ENCODE measurements at regions of chr2 and their contacts with region 1.

Region 1: GRCh38 chr2:104849618-104850141 is 4.2 kb upstream of the POU3F3 start:
- DNase-seq: peak in 1 of 2 experiments; percentile 79
- H3K4me3 ChIP-seq: peak overlapping the region in 1 of 4 experiments; percentile 78; a peak in 3 of 8 replicates
- H3K27ac ChIP-seq: no peak overlapping the region
- H3K4me1 ChIP-seq: peaks cover 16 to 43% (median 22%) of the 10 kb centered on the region in 4 experiments
- H3K27me3 ChIP-seq: peaks cover 52 to 93% (median 74%) of the 10 kb centered on the region in 4 experiments
- CTCF ChIP-seq: peak in 2 of 3 experiments; percentile 54 to 71; a peak in 3 of 4 replicates
- EP300 ChIP-seq: no peak
- POLR2A ChIP-seq: no peak
- RAD21 ChIP-seq: peak; percentile 72 to 74

Region 2: GRCh38 chr2:104733544-104733943 is 116.1 kb before region 1 on chr2:
- CTCF ChIA-PET with region 1: no interaction called
- POLR2A ChIA-PET with region 1: no interaction called
- DNase-seq: peak; percentile 54 to 76
- H3K4me3 ChIP-seq: no peak overlapping the region
- H3K27ac ChIP-seq: no peak overlapping the region
- H3K4me1 ChIP-seq: no peaks in the 10 kb centered on the region
- H3K27me3 ChIP-seq: 0 out of 7 replicates have a peak, but pooled peaks cover 0 to 2% (median 0%) of the 10 kb centered on the region in 4 experiments
- CTCF ChIP-seq: peak; percentile 81 to 96 (median 95)
- EP300 ChIP-seq: no peak
- POLR2A ChIP-seq: no peak
- RAD21 ChIP-seq: peak; percentile 76 to 81

Region 3: GRCh38 chr2:104804148-104804890 is 45.4 kb before region 1 on chr2:
- CTCF ChIA-PET with region 1: interaction called, 10 read pairs
- POLR2A ChIA-PET with region 1: no interaction called
- DNase-seq: no peak
- H3K4me3 ChIP-seq: no peak overlapping the region
- H3K27ac ChIP-seq: no peak overlapping the region
- H3K4me1 ChIP-seq: no peaks in the 10 kb centered on the region
- H3K27me3 ChIP-seq: no peaks in the 10 kb centered on the region
- CTCF ChIP-seq: peak; percentile 39 to 50 (median 44)
- EP300 ChIP-seq: no peak
- POLR2A ChIP-seq: no peak
- RAD21 ChIP-seq: peak; percentile 71 to 72

Region 4: DNA sequence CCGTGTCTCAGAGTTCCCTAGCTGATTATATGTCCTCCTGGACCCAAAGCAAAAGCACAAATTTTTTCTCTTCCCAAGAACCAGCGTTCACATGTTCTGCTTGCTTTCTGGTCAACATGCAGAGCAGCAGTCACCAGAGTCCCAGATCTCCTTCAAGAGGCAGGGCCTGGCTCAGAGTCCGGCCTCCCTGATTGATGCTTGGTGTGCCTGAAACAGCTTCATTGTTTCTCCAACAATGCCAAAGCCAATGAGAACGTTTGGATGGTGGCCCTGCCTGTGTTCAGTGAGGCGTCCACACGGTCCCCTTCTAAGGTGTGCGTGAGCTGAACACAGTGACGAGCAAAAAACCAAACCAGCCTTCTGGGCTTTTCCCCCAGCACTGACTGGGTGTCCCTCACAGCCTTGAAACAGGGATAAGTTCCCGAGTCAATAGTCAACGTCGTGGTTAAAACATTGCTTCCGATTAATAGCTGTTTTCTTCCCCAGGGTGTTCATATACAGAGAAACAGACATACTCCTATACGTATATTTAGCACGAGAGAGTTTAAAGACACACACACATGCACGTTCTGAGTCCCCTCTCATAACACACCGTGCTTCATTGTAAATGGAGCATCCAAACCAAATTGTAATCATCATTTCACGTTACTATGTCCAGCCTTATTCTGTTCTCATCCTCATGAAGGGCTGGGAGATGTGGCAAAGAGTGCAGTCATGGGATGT is 15.1 kb before region 1 on chr2:
- CTCF ChIA-PET with region 1: interaction called, 13 read pairs
- POLR2A ChIA-PET with region 1: interaction called, 3 read pairs
- DNase-seq: no peak
- H3K4me3 ChIP-seq: no peak overlapping the region
- H3K27ac ChIP-seq: no peak overlapping the region
- H3K4me1 ChIP-seq: no peaks in the 10 kb centered on the region
- H3K27me3 ChIP-seq: no peaks in the 10 kb centered on the region
- CTCF ChIP-seq: no peak
- EP300 ChIP-seq: no peak
- POLR2A ChIP-seq: no peak
- RAD21 ChIP-seq: no peak

Region 5: DNA sequence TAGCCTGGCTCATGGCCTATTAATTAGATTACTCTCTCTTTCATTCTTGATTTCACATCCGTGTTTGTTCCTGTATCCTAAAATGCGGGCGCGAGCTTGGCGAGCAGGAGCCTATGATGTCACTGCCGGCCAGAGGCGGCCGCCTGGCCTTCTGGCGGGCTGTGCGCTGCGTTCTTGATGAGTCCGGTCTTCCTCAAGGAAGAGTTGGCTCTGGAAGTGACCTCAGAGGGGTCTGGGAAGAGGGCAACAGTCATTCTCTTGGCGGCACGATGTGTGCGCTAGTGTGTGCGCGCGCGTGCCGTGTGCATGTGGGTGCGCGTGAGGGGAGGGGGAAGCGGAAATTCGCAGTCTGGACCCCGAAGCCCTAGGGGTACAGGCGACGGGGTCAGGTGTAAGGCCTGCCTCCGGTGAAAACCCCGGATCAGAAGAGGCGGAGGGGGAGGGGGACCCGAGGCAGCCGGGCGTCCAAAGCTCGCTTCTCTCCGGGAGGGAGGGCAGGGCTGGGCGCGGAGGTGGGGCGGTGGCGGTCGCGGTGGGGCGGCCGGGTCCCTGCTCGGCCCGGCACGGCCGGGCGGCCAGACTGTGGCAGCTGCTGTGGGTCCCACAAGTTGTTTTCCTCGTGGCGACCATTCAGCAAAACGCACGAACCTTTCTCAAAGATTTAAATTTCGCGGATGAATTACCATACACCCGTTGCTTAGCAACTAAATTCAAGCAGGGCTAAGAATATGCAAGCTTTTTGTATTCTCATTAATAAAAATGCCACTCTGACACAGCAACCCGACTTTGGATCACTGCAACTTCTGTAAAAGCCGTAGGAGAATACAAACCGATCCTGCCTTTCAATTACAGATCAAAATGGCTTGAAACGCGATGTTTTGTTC is 12.6 kb after region 1 on chr2:
- CTCF ChIA-PET with region 1: interaction called, 60 read pairs
- POLR2A ChIA-PET with region 1: interaction called, 12 read pairs
- DNase-seq: peak in 1 of 2 experiments; percentile 85
- H3K4me3 ChIP-seq: peak overlapping the region; percentile 39 to 65 (median 49)
- H3K27ac ChIP-seq: no peak overlapping the region
- H3K4me1 ChIP-seq: peaks cover 10 to 37% (median 23%) of the 10 kb centered on the region in 4 experiments
- H3K27me3 ChIP-seq: peaks cover 73 to 100% (median 89%) of the 10 kb centered on the region in 4 experiments
- CTCF ChIP-seq: no peak
- EP300 ChIP-seq: no peak
- POLR2A ChIP-seq: no peak
- RAD21 ChIP-seq: no peak

Region 6: DNA sequence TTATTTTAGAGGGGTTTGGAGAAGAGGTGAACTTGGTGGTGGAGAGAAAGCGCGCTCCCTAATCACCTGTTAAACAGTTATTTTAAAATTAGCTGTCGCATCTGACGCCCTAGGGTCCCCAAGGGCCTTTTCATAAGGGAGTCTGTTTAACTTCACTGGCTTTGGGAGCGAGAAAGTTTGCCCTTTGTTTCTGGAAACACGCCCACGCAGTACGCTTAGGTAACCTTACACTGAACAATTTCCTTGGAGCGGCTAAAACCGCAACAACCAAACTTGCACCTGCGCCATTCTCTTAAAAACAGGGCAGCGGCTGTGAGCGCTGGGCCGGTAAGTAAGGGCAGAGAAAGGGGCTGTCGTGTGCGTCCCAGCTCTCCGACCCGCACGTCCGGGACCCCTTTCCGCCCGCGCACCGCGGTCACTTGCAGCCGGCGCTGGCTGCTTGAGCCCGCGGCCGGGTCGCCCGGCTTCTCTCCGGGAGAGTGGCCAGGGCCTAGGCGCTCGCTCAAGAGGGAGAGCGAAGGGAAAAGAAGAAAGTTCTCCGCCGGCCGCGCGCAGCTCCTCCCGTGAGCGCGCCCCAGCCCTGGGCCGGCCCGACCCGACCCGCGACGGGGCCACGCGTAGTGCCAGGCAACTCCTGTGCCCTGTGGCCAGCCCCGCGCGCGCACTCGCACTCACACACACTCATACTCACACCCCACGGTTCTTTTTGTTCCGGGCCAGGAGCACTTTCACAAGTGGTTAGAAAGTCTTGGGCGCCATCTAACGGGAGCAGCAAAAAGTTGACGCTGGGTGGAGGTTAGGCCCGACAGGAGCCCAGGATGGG is 23.4 kb after region 1 on chr2:
- CTCF ChIA-PET with region 1: interaction called, 27 read pairs
- POLR2A ChIA-PET with region 1: interaction called, 3 read pairs
- DNase-seq: peak in 1 of 2 experiments; percentile 88
- H3K4me3 ChIP-seq: peak overlapping the region; percentile 48 to 75 (median 56)
- H3K27ac ChIP-seq: no peak overlapping the region
- H3K4me1 ChIP-seq: peaks cover 0 to 13% (median 4%) of the 10 kb centered on the region in 4 experiments; a peak in 5 of 7 replicates
- H3K27me3 ChIP-seq: peaks cover 43 to 80% (median 67%) of the 10 kb centered on the region in 4 experiments
- CTCF ChIP-seq: peak; percentile 62 to 76 (median 70)
- EP300 ChIP-seq: no peak
- POLR2A ChIP-seq: no peak
- RAD21 ChIP-seq: peak; percentile 76 to 80

Region 7: GRCh38 chr2:104944495-104944894 is 94.8 kb after region 1 on chr2:
- CTCF ChIA-PET with region 1: interaction called, 22 read pairs
- POLR2A ChIA-PET with region 1: no interaction called
- DNase-seq: peak in 1 of 2 experiments; percentile 61
- H3K4me3 ChIP-seq: no peak overlapping the region
- H3K27ac ChIP-seq: no peak overlapping the region
- H3K4me1 ChIP-seq: peaks cover 0 to 3% (median 0%) of the 10 kb centered on the region in 4 experiments; a peak in 1 of 7 replicates
- H3K27me3 ChIP-seq: peaks cover 0 to 1% (median 0%) of the 10 kb centered on the region in 4 experiments; a peak in 1 of 7 replicates
- CTCF ChIP-seq: peak in 2 of 3 experiments; percentile 64 to 74; a peak in 3 of 4 replicates
- EP300 ChIP-seq: no peak
- POLR2A ChIP-seq: no peak
- RAD21 ChIP-seq: peak; percentile 95 to 96

Measured in H1 (cell line).